AG04450 (cell line): ENCODE measurements at regions of chr1 and their contacts with region 1.

Region 1: DNA sequence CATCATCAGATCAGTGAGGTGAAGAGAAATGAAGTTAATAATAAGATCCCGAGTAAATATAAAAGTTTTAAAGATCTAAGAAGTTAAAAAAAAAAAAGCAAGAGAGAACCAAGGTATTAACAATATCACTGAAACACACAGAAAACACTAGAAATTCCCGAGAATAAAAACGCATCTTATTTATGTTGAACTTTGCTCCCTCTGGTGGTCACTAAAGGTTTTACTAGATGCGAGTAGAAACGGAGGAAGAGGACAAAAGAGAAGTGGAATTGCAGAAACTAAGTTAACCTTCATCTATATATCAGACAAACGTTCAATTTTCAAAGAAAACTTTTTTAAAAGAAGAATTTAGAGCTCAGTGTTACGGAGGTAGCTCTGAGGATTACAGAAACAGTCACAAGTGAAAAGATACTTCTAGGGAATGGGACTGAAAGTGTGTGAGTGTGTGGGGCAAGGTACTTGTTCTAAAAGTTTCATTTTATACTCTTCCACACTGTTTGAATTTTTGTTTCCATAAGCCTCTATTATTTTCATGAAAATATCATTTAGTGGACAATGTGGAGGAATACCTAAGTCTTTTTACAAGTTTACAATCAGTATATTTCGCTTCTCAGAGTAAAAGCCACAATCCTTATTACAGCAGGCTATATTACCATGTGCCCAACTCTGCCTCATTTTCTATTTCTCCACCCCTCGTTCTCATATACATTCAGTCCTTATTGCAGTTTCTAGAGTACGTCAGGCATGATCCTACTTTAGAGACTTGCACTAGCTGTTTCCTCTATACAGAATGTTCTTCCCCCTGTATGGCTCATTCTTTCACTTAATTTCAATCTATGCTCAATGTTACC is 19.7 kb downstream of the ACBD6 start:
- DNase-seq: no peak
- H3K4me3 ChIP-seq: no peak overlapping the region
- H3K27ac ChIP-seq: no peak overlapping the region
- H3K27me3 ChIP-seq: no peaks in the 10 kb centered on the region
- CTCF ChIP-seq: peak; percentile 74

Region 2: GRCh38 chr1:180057883-180058396 is 424.7 kb before region 1 on chr1:
- CTCF ChIA-PET with region 1: interaction called, 10 read pairs
- POLR2A ChIA-PET with region 1: no interaction called
- DNase-seq: no peak
- H3K4me3 ChIP-seq: no peak overlapping the region
- H3K27ac ChIP-seq: no peak overlapping the region
- H3K27me3 ChIP-seq: no peaks in the 10 kb centered on the region
- CTCF ChIP-seq: no peak

Region 3: DNA sequence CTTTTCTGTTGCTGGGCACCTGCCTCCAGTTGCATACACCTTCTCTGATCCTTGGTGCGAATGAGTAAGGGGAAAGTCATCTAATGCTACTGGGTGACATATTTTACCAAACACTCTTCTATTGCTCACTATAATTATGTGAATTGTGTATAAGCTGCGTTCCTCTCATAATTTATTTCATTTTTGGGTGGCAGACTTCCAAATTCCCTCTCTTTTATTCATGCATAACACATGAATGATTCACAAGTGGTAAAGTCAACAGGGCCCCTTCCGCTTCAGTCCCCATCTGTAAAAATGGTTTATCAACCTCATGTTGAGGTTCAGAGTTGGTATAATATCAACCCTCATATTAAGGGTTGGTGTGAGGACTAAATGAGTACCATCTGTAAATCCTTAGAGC is 331.1 kb before region 1 on chr1:
- CTCF ChIA-PET with region 1: no interaction called
- POLR2A ChIA-PET with region 1: no interaction called
- DNase-seq: peak; percentile 86
- H3K4me3 ChIP-seq: no peak overlapping the region
- H3K27ac ChIP-seq: peak overlapping the region; percentile 80
- H3K27me3 ChIP-seq: no peaks in the 10 kb centered on the region
- CTCF ChIP-seq: no peak

Region 4: DNA sequence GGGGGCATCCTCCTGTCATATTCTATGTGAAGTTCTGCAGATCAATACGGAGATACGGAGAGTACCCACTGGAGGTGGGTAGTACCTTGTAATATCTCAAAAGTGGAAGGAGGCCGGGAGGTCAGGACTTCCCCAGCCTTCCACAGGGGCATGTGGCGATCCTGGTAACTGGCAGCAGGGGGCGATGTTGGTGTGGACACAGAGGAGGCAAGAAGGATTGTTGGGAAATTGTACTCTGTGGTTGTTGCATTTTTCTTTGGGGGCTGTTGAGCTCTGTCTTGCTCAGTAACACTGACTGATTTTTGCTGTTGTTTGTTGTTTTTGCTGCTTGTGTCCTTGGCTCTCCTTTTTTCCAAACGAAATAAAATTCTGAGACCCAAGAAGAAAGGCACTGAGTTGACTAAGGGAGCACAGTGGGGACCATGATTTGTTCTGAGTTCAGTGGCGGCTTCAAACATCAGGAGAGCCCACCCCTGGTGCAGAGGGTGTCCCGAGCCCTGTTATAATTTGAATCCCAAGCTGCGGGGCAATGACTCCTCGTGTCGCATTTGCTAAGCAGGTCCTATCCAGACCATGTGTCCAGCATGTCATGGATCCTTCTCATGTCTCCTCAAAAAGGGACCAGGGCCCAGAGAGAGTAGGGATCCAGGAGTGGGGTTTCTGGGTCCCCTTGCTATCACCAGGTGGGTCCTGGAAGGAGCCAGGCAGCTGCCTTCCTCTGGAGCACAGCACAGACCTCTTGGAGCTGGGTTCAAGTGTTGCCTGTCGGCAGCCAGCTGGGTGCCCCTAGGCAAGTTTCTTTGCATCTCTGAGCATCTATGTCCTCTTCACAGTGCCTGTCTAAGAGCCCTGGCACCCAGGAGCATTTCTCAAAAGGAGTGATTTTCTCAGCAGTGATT is 229.8 kb before region 1 on chr1:
- CTCF ChIA-PET with region 1: interaction called, 145 read pairs
- POLR2A ChIA-PET with region 1: no interaction called
- DNase-seq: peak; percentile 30
- H3K4me3 ChIP-seq: no peak overlapping the region
- H3K27ac ChIP-seq: no peak overlapping the region
- H3K27me3 ChIP-seq: peaks cover 4% of the 10 kb centered on the region
- CTCF ChIP-seq: peak; percentile 91

Region 5: GRCh38 chr1:180462102-180462501 is 20.5 kb before region 1 on chr1:
- CTCF ChIA-PET with region 1: interaction called, 33 read pairs
- POLR2A ChIA-PET with region 1: no interaction called
- DNase-seq: no peak
- H3K4me3 ChIP-seq: no peak overlapping the region
- H3K27ac ChIP-seq: no peak overlapping the region
- H3K27me3 ChIP-seq: no peaks in the 10 kb centered on the region
- CTCF ChIP-seq: no peak

Region 6: DNA sequence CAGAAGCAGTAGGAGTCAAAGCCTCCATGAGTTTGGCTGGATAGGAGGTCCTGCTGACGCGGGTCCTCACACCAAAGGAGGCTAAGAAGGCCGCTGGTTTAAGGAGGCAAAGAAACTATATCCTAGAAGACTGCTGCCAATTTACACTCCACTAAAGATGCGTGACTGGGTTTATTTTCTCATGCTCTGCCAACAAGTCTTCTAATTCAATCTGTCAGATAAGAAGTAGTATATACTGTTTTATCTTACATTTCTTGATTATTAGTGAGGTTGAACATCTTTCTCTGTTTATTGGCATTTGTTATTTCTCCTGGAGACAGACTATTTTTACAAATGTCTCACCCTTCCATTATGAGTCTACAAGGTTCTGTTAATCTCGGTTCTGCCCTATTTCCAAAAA is 14.3 kb before region 1 on chr1:
- CTCF ChIA-PET with region 1: interaction called, 33 read pairs
- POLR2A ChIA-PET with region 1: no interaction called
- DNase-seq: no peak
- H3K4me3 ChIP-seq: no peak overlapping the region
- H3K27ac ChIP-seq: no peak overlapping the region
- H3K27me3 ChIP-seq: no peaks in the 10 kb centered on the region
- CTCF ChIP-seq: no peak

Region 7: DNA sequence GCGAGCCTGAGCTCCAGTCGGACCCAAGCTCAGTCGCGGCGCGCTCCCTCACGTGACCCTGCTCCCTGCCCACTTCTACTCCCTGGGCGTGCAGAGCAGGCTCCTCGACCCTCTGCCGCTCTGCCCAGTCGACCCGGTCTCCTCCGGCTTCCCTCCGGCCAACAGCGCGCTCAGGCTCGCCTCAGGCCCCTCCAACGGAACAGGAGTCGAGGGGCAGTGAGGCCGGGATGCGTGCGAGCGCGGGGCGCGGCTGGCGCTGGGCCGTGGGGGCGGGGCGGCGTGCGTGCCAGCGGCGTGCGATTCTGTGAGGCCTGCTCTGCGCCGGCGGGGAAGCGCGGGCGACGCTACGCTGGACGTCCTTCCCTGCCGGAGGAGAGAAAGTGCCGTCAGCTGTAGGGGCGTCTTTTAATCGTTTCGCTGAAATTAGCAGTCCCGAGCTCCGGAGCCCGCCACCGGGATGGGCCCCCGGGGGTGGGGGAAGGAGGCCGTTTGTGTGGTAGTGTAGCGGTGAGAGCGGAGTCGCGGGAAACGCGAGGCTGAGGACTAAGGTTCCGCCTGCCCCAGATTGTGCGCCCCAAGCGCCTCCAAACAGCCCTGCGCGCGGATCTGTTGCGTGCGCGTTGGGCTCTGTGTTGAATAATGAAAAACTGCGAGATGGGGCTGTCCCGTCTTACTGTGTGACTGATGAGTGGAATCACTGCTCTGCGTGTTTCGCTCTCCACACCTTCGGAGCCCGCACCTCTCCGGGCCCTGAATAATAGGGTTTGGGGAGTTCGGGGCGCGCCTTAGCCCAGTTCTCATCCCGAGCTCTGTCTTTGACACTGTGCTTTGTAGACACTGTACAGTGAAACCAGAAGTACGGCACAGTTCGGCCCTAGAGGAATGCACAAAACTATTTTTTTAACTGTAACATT is 20.0 kb after region 1 on chr1 and contains the start of gene ACBD6:
- CTCF ChIA-PET with region 1: interaction called, 10 read pairs
- POLR2A ChIA-PET with region 1: no interaction called
- DNase-seq: no peak
- H3K4me3 ChIP-seq: peak within 1 kb of the TSS; percentile 94
- H3K27ac ChIP-seq: peak within 1 kb of the TSS; percentile 94
- H3K27me3 ChIP-seq: no peaks in the 10 kb centered on the region
- CTCF ChIP-seq: peak; percentile 30
- polyA plus RNA-seq, gene ACBD6: 84.1 and 87.6 TPM in 2 replicates